Thyroid gland (tissue), 4 donors: ENCODE measurements at regions of chr11 and their contacts with region 1.

Region 1: DNA sequence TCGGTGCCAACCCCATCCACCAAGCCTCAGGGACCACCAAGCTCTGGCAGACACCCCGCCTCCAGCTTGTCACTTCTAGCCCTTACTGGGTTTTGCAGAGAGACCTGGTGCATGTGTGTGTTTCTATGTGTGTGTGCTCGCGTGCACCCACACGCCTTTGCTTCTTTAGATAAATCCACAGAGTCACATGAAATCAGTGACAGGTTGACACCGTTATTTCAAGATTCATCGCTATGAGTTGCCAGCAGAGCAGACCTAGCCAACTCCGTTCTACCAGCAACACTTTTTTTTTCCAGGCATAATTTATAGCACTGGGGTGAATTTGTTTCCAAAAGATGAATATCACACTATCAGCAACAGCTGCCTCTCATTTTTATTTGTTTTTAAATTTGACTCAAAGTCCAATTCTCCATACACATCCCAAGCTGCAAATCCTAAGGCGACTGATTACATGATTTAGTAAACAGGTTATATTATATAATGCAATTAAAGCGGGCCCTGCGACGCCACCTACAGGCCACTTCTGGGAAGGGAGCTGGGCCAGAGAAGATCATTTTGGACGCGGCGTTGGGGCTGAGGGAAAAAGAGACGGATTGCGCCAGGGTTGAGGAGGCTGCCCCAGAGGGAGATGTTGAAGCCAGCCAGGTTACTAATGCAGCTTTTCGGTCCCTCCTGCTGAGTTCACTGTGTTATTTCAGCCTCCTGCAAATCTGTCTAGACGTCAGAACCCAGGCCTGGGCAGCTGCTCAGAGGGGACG is 150.5 kb downstream of the FEZ1 start:
- DNase-seq: peak; percentile 87 to 89
- H3K4me3 ChIP-seq: no peak overlapping the region
- H3K27ac ChIP-seq: peak overlapping the region; percentile 14 to 77 (median 63)
- H3K4me1 ChIP-seq: peaks cover 23 to 52% of the 10 kb centered on the region in 2 donors
- H3K27me3 ChIP-seq: no peaks in the 10 kb centered on the region
- CTCF ChIP-seq: peak; percentile 61 to 90 (median 86)
- POLR2A ChIP-seq: no peak

Region 2: DNA sequence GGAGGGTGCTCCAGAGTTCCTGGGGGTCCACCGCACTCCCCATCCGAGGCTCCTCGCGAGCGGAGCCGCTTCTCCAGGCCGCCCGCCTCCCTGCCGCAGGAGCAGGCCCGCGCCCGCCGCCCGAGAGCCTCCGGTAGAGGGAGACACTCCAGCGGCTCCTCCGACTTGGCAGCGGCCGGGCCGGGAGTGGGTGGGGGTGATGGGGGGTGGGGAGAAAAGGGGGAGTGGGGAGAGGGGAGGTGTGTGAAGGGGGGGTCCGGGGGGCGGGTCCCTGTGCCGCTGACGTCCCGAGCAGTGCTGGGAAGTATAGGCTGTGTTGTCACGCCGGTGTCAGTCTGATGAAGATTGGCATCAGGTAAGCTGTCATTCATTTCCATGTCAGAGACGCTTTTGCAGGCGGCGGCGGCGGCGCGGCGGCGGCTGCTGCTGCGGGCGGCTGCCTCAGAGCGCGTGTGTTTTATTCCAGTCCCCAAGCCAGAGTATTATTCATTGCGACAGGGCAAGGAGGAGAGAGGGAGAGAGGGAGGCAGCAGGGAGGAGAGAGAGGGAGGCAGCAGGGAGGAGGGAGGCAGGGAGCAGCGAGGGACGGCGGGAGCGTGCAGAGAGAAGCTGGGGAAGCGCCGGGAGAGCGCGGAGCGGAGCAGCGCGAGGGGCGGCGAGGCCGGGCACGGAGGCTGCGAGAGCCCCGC is 181.0 kb before region 1 on chr11 and contains the start of gene PKNOX2:
- intact Hi-C with region 1: loop called (anchors 5 kb)
- DNase-seq: peak; percentile 82 to 88
- H3K4me3 ChIP-seq: peak within 1 kb of the TSS; percentile 27 to 39 (median 37)
- H3K27ac ChIP-seq: peak within 1 kb of the TSS; percentile 54 to 89 (median 82)
- H3K4me1 ChIP-seq: peaks cover 21 to 37% of the 10 kb centered on the region in 2 donors
- H3K27me3 ChIP-seq: no peaks in the 10 kb centered on the region
- CTCF ChIP-seq: peak in 5 of 6 experiments; percentile 18 to 83 (median 42)
- POLR2A ChIP-seq: peak in 1 of 2 donors; percentile 86
- total RNA-seq, gene PKNOX2: 6.3 to 28.0 (median 18.7) TPM